ENCODE measurements at regions of chr6 and their contacts with region 1.

Region 1: GRCh38 chr6:127900935-127901334 is at the start of gene THEMIS:
- DNase-seq: peak; percentile 83
- ATAC-seq: peak; percentile 76
- H3K4me3 Mint-ChIP-seq: peak within 1 kb of the TSS; percentile 97
- H3K27ac Mint-ChIP-seq: peak within 1 kb of the TSS; percentile 92
- H3K4me1 Mint-ChIP-seq: peaks cover 38% of the 10 kb centered on the region
- H3K27me3 Mint-ChIP-seq: no peaks in the 10 kb centered on the region
- total RNA-seq, gene THEMIS: 142 to 144 TPM

Region 2: GRCh38 chr6:127918506-127919427 is 17.8 kb after region 1 on chr6:
- CTCF ChIA-PET with region 1: interaction called, 19 read pairs
- POLR2A ChIA-PET with region 1: interaction called, 22 read pairs
- DNase-seq: peak; percentile 56
- ATAC-seq: peak; percentile 69
- H3K4me3 Mint-ChIP-seq: peak overlapping the region; percentile 71
- H3K27ac Mint-ChIP-seq: peak overlapping the region; percentile 85
- H3K4me1 Mint-ChIP-seq: peaks cover 85% of the 10 kb centered on the region
- H3K27me3 Mint-ChIP-seq: no peaks in the 10 kb centered on the region

Region 3: DNA sequence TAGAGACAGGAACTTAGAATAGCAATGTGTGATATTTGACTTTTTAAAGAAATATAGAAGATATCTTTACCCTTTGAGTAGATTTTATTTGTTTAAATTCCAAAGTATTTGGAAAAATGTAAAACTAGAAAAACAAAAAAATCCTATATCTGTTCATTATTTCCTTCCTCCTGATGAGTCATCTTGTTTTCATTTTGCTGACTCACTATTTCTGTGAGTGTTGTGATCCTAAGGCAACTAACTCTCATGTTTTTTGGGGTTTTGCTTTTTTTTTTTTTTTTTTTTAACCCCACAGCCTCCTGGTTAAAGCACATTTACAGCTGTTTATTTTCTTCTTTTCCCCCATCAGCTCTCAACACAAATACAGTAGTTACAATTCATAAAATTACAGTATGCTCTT is 37.8 kb after region 1 on chr6:
- CTCF ChIA-PET with region 1: interaction called, 5 read pairs
- POLR2A ChIA-PET with region 1: interaction called, 14 read pairs
- DNase-seq: no peak
- ATAC-seq: no peak
- H3K4me3 Mint-ChIP-seq: peak overlapping the region; percentile 10
- H3K27ac Mint-ChIP-seq: peak overlapping the region; percentile 65
- H3K4me1 Mint-ChIP-seq: peaks cover 54% of the 10 kb centered on the region
- H3K27me3 Mint-ChIP-seq: no peaks in the 10 kb centered on the region

Region 4: GRCh38 chr6:127951172-127951917 is 50.4 kb after region 1 on chr6:
- CTCF ChIA-PET with region 1: interaction called, 14 read pairs
- POLR2A ChIA-PET with region 1: interaction called, 8 read pairs
- DNase-seq: no peak
- ATAC-seq: peak; percentile 72
- H3K4me3 Mint-ChIP-seq: peak overlapping the region; percentile 55
- H3K27ac Mint-ChIP-seq: peak overlapping the region; percentile 94
- H3K4me1 Mint-ChIP-seq: peaks cover 74% of the 10 kb centered on the region
- H3K27me3 Mint-ChIP-seq: no peaks in the 10 kb centered on the region

Region 5: GRCh38 chr6:127971945-127972391 is 71.0 kb after region 1 on chr6:
- CTCF ChIA-PET with region 1: interaction called, 26 read pairs
- POLR2A ChIA-PET with region 1: interaction called, 55 read pairs
- DNase-seq: peak; percentile 75
- ATAC-seq: peak; percentile 84
- H3K4me3 Mint-ChIP-seq: peak overlapping the region; percentile 76
- H3K27ac Mint-ChIP-seq: peak overlapping the region; percentile 97
- H3K4me1 Mint-ChIP-seq: peaks cover 76% of the 10 kb centered on the region
- H3K27me3 Mint-ChIP-seq: no peaks in the 10 kb centered on the region

Region 6: GRCh38 chr6:127980996-127981395 is 80.1 kb after region 1 on chr6:
- CTCF ChIA-PET with region 1: interaction called, 18 read pairs
- POLR2A ChIA-PET with region 1: interaction called, 11 read pairs
- DNase-seq: no peak
- ATAC-seq: no peak
- H3K4me3 Mint-ChIP-seq: peak overlapping the region; percentile 42
- H3K27ac Mint-ChIP-seq: peak overlapping the region; percentile 50
- H3K4me1 Mint-ChIP-seq: peaks cover 64% of the 10 kb centered on the region
- H3K27me3 Mint-ChIP-seq: no peaks in the 10 kb centered on the region